Body of pancreas (tissue), 4 donors: ENCODE measurements at regions of chr4 and their contacts with region 1.

Region 1: GRCh38 chr4:152849350-152849749 is 69.6 kb downstream of the ARFIP1 start:
- DNase-seq: no peak
- ATAC-seq: no peak
- H3K4me3 ChIP-seq: no peak overlapping the region
- H3K27ac ChIP-seq: no peak overlapping the region
- H3K4me1 ChIP-seq: no peaks in the 10 kb centered on the region
- H3K27me3 ChIP-seq: no peaks in the 10 kb centered on the region
- CTCF ChIP-seq: no peak
- POLR2A ChIP-seq: no peak

Region 2: GRCh38 chr4:153083447-153083947 is 234.1 kb after region 1 on chr4:
- intact Hi-C with region 1: loop called (anchors 5 kb)
- DNase-seq: peak; percentile 63 to 80 (median 74)
- ATAC-seq: peak; percentile 85
- H3K4me3 ChIP-seq: no peak overlapping the region
- H3K27ac ChIP-seq: no peak overlapping the region
- H3K4me1 ChIP-seq: peaks cover 11% of the 10 kb centered on the region
- H3K27me3 ChIP-seq: no peaks in the 10 kb centered on the region
- CTCF ChIP-seq: peak; percentile 11 to 77 (median 61)
- POLR2A ChIP-seq: no peak